Heart right ventricle (tissue), 16 donors: ENCODE measurements at regions of chr6 and their contacts with region 1.

Region 1: GRCh38 chr6:69942485-69942884 is 76.1 kb downstream of the COL19A1 start:
- DNase-seq: no peak
- ATAC-seq: no peak
- H3K4me3 ChIP-seq: no peak overlapping the region
- H3K27ac ChIP-seq: no peak overlapping the region
- H3K4me1 ChIP-seq: peaks cover 0 to 8% (median 0%) of the 10 kb centered on the region in 9 donors
- H3K27me3 ChIP-seq: no peaks in the 10 kb centered on the region
- CTCF ChIP-seq: no peak

Region 2: GRCh38 chr6:71239694-71240093 is 1297.2 kb after region 1 on chr6:
- intact Hi-C with region 1: loop called in 1 of 10 experiments (anchors 5 kb)
- DNase-seq: no peak
- ATAC-seq: peak in 1 of 8 donors; percentile 44
- H3K4me3 ChIP-seq: no peak overlapping the region
- H3K27ac ChIP-seq: no peak overlapping the region
- H3K4me1 ChIP-seq: no peaks in the 10 kb centered on the region
- H3K27me3 ChIP-seq: no peaks in the 10 kb centered on the region
- CTCF ChIP-seq: no peak